ENCODE measurements at regions of chr19 and their contacts with region 1.

Region 1: DNA sequence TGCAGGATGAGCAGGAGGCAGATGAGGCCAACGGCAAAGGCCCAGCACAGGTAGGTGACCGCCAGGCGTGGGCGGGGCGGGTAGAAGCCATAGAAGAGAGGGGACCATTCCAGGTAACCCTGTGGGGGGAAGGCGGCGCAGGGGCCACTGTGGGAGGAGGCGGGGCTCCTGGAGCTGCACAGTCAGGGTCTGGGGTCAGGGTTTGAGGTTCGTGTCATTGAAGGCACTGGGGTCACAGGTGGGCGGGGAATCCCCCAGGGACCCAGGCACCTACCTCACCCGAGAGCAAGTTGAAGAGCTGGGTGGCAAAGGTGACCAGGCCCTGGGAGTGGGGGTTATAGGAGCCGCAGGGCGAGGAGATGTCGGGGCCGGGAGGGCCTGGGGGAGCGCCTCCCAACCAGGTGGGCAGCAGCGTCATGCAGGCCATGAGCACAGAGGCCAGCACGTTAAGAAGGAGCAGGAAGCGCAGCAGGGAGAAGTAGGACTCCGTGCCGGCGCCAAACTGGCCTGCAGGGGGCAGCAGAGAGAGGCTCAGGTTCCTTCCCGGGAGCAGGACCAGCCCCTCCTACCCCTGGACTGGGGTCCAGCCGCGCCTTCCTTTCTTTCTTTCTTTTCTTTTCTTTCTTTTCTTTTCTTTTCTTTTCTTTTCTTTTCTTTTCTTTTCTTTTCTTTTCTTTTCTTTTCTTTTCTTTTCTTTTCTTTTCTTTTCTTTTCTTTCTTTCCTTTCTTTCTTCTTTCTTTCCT is 4.6 kb downstream of the TMC4 start:
- DNase-seq: peak; percentile 92 to 95
- ATAC-seq: peak; percentile 82 to 87
- H3K4me3 ChIP-seq: no peak overlapping the region
- H3K27ac ChIP-seq: peak overlapping the region in 1 of 2 experiments; percentile 52; a peak in 2 of 6 replicates
- H3K4me1 ChIP-seq: peaks cover 14% of the 10 kb centered on the region; the same call in 2 of the 3 replicates
- CTCF ChIP-seq: peak; percentile 79
- EP300 ChIP-seq: no peak
- POLR2A ChIP-seq: no peak
- RAD21 ChIP-seq: peak; percentile 71 to 73

Region 2: DNA sequence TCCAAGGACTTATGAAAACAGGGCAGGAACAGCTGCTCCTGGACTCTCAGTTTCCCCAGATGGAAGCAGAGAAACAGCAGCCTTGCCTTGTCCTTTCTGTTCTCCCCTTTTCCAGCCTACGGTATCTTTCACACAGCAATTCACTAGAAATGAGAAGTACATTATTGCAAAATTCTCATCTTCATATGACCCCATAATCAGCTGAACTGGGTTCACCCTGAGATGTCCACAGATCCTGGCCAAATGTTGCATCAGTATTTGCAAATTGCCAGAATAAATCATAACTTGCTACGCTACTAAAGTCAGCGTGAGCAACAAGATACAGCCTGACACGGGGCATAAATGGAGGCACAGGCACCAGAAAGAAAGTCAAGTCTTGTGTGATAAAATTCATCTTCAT is 120.7 kb before region 1 on chr19:
- CTCF ChIA-PET with region 1: no interaction called
- POLR2A ChIA-PET with region 1: no interaction called
- DNase-seq: no peak
- ATAC-seq: no peak
- H3K4me3 ChIP-seq: no peak overlapping the region
- H3K27ac ChIP-seq: no peak overlapping the region
- H3K4me1 ChIP-seq: no peaks in the 10 kb centered on the region
- CTCF ChIP-seq: no peak
- EP300 ChIP-seq: no peak
- POLR2A ChIP-seq: no peak
- RAD21 ChIP-seq: no peak

Region 3: DNA sequence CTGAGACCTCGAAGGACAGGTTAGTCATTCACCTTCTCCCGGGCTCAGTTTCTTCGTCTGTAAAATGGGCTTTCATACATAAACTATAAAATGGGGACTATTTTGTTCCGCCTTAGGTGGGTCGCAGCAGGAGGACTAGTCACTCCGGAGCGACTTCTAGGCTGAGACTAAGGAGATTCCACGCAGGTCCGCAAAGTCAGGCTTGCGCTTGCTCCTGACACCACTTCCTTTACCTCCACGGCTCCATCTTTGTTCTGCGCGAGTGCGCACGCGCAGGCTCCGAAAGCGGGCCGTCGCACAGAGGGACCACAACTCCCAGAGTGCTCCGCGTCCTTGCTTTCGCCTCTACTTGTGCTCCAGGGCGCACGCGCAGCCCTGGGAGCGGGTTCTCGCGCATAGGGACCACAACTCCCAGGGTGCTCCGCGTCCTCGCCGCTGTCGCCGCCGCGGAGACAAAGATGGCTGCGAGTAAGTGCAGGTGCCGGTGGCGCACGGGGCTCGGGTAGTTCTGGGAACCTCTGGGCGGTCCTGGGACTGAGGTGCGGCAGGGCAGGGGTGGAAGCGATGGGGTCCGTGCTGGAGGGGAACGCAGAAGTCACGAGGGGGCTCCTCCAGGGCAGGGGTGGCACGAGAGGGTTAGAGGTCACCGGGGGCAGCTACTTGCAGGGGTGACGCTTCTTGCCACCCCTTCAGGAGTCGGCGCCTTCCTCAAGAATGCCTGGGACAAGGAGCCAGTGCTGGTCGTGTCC is 65.8 kb before region 1 on chr19 and contains the start of gene NDUFA3:
- CTCF ChIA-PET with region 1: no interaction called
- POLR2A ChIA-PET with region 1: no interaction called
- DNase-seq: peak; percentile 99
- ATAC-seq: peak; percentile 96 to 99
- H3K4me3 ChIP-seq: peak within 1 kb of the TSS; percentile 68
- H3K27ac ChIP-seq: peak within 1 kb of the TSS; percentile 78 to 93
- H3K4me1 ChIP-seq: 0 out of 3 replicates have a peak, but pooled peaks cover 8% of the 10 kb centered on the region
- CTCF ChIP-seq: no peak
- EP300 ChIP-seq: no peak
- POLR2A ChIP-seq: peak; percentile 75
- RAD21 ChIP-seq: no peak
- polyA plus RNA-seq, gene NDUFA3: 36.5 and 43.5 TPM in 2 replicates

Region 4: DNA sequence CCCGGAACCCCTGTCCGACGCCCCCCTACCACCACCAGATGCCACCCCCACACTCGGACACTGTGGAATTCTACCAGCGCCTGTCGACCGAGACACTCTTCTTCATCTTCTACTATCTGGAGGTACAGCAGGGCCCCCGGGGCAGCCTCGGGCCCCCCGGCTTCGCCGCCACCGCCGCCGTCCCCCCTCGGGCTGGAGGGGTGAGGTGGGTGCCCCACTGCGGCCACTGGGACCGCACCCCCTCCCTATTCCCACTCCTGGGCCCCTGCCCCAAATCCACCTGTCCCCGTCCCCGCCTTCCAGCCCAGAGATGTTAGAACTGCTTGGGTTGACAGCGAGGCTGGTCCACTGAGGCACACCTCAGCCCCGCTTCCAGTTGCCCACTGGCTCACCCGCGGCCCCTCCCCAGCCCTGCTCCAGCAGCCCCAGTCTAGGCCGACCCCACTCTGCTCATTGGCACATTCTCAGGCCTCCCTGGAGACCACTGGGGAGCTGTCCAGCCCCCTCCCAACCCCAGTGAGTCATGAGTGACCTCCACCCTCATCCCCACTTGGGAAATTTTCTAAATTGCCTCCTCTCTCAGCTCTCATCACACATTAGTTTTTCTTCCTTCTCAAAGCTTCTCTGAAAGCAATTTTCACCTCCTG is 15.3 kb before region 1 on chr19:
- CTCF ChIA-PET with region 1: interaction called, 27 read pairs
- POLR2A ChIA-PET with region 1: no interaction called
- DNase-seq: no peak
- ATAC-seq: no peak
- H3K4me3 ChIP-seq: no peak overlapping the region
- H3K27ac ChIP-seq: no peak overlapping the region
- H3K4me1 ChIP-seq: peaks cover 1% of the 10 kb centered on the region; the same call in 2 of the 3 replicates
- CTCF ChIP-seq: no peak
- EP300 ChIP-seq: no peak
- POLR2A ChIP-seq: no peak
- RAD21 ChIP-seq: no peak

Region 5: GRCh38 chr19:54189735-54190502 is 21.6 kb after region 1 on chr19:
- CTCF ChIA-PET with region 1: interaction called, 295 read pairs
- POLR2A ChIA-PET with region 1: interaction called, 10 read pairs
- DNase-seq: peak; percentile 96 to 100
- ATAC-seq: peak; percentile 63 to 78
- H3K4me3 ChIP-seq: peak overlapping the region; percentile 80
- H3K27ac ChIP-seq: peak overlapping the region; percentile 94 to 95
- H3K4me1 ChIP-seq: peaks cover 23% of the 10 kb centered on the region
- CTCF ChIP-seq: no peak
- EP300 ChIP-seq: no peak
- POLR2A ChIP-seq: peak; percentile 51
- RAD21 ChIP-seq: no peak

Region 6: DNA sequence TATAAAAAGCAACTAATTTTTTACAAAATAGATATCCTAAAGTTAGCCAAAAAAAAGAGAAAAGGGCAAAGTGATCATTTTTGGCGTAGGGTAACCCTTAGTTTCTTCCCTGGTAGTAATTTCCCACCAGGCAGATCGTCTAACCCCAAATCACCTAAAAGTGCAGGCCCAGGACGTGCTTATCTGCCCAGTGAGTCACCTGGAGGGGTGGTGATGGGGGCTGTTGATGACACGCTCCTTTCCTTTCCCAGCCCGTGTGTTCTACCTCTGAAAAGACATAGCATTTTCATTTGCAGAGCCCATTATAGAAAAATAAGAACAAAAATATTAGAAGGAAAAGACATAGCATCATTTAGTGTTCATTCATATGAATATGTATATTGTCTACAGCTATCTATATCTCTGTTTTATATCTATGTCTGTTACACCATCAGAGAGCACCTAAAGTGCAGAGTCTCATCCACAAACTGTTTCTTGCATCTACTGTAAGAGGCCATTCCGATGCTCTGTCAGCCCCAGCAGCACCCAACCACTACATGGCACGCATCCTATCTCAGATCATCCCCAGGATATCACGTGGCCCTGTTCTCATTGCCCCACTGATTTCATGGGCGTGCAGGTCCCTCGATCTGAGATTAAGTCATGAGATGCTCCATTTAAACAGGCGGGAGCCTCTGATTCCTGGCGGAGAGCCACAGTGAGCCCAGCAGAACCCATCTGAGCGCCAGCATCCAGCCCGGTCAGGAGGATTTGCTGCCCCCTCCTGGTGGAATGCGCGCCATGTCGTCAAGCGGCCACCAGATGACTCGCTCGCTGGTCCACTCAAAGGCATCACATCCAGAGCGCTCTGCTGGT is 63.0 kb after region 1 on chr19:
- CTCF ChIA-PET with region 1: interaction called, 18 read pairs
- POLR2A ChIA-PET with region 1: no interaction called
- DNase-seq: peak; percentile 57 to 82
- ATAC-seq: peak; percentile 98 to 99
- H3K4me3 ChIP-seq: no peak overlapping the region
- H3K27ac ChIP-seq: no peak overlapping the region
- H3K4me1 ChIP-seq: no peaks in the 10 kb centered on the region
- CTCF ChIP-seq: peak; percentile 92
- EP300 ChIP-seq: no peak
- POLR2A ChIP-seq: no peak
- RAD21 ChIP-seq: peak; percentile 85 to 87